Activated CD8-positive, alpha-beta T cell treated with anti-CD3 and anti-CD28 coated beads, Interleukin-2, amount 10 ng/mL, durations not matched to agents 7 days and 5 days (primary cell): ENCODE measurements at regions of chr16 and their contacts with region 1.

Region 1: GRCh38 chr16:57013229-57013628 is 23.9 kb downstream of the NLRC5 start:
- DNase-seq: no peak
- ATAC-seq: no peak
- H3K4me3 Mint-ChIP-seq: peak overlapping the region; percentile 59
- H3K27ac Mint-ChIP-seq: peak overlapping the region; percentile 83
- H3K4me1 Mint-ChIP-seq: peaks cover 82% of the 10 kb centered on the region
- H3K27me3 Mint-ChIP-seq: no peaks in the 10 kb centered on the region

Region 2: DNA sequence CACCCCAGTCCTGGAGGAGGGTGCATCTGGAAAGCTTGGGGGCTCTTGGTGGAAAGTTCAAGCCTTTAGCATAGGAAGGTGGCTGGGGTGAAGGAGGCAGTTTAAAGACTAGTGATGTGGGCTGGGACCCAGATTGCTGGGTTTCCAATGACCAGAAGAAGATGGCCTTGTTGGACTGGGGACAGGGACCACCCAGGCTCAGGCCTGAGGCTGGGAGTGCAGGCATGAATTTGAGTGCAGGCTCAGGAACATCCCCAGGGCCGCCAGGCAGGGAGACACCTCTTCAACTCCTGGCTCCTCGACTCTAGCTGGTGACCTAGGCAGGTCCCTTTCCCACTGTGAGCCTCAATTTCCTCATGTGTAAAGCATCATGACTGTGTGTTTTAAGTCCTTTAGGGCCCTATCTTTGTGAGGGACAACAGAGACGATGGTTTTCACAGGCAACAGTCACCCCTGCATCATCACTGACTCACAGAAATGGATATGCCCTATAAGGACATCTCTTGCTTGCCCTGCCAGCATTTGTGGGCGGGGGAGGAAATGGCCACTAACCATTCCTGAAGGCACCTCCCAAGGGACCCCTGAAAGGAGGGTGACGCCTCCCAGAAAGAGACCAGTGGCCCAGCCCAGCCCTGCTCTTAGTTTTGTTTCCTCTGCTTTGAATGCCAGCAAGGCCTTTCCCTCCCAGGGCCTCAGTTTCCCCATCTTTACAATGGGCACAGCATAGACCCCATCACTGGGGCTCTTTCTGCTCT is 12.8 kb before region 1 on chr16:
- CTCF ChIA-PET with region 1: interaction called, 7 read pairs
- POLR2A ChIA-PET with region 1: interaction called, 58 read pairs
- DNase-seq: peak; percentile 58
- ATAC-seq: peak; percentile 45
- H3K4me3 Mint-ChIP-seq: peak overlapping the region; percentile 52
- H3K27ac Mint-ChIP-seq: peak overlapping the region; percentile 92
- H3K4me1 Mint-ChIP-seq: peaks cover 93% of the 10 kb centered on the region
- H3K27me3 Mint-ChIP-seq: no peaks in the 10 kb centered on the region

Region 3: DNA sequence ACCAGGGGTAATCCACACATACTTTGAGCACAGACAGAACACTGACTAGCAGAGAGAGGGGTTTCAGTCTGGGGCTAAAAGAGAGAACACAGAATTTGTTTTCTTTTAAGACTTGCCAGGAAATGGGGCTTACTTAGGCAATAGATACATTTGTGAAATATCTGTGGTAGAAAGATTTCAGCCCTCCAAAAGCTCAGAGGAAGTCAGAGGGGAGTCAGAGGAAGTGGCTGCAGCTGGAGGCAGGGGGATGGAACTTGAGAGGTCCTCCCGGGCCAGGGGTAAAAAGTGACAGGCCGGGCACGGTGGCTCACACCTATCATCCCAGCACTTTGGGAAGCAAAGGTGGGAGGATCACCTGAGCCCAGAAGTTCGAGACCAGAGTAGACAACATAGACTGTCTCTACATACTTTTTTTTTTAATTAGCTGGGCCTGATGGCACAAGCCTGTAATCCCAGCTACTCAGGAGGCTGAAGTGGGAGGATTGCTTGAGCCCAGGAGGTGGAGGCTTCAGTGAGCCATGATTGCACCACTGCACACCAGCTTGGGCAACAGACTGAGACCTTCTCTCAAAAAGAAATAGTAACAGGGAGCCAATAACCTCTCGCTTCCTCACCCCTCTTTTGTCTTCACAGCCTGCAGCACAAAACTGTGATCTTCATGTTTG is 26.1 kb after region 1 on chr16:
- CTCF ChIA-PET with region 1: interaction called, 12 read pairs
- POLR2A ChIA-PET with region 1: interaction called, 14 read pairs
- DNase-seq: peak; percentile 70
- ATAC-seq: peak; percentile 13
- H3K4me3 Mint-ChIP-seq: peak overlapping the region; percentile 64
- H3K27ac Mint-ChIP-seq: peak overlapping the region; percentile 97
- H3K4me1 Mint-ChIP-seq: peaks cover 91% of the 10 kb centered on the region
- H3K27me3 Mint-ChIP-seq: no peaks in the 10 kb centered on the region

Region 4: GRCh38 chr16:57300387-57301125 is 287.3 kb after region 1 on chr16:
- CTCF ChIA-PET with region 1: no interaction called
- POLR2A ChIA-PET with region 1: no interaction called
- DNase-seq: peak; percentile 99
- ATAC-seq: peak; percentile 91
- H3K4me3 Mint-ChIP-seq: no peak overlapping the region
- H3K27ac Mint-ChIP-seq: no peak overlapping the region
- H3K4me1 Mint-ChIP-seq: peaks cover 41% of the 10 kb centered on the region
- H3K27me3 Mint-ChIP-seq: peaks cover 5% of the 10 kb centered on the region